Dendritic cell treated with granulocyte-macrophage colony-stimulating factor and Interleukin-4, amounts not matched to agents 40 ng/mL and 50 ng/mL, for 4 days (primary cell): ENCODE measurements at regions of chr20 and their contacts with region 1.

Region 1: DNA sequence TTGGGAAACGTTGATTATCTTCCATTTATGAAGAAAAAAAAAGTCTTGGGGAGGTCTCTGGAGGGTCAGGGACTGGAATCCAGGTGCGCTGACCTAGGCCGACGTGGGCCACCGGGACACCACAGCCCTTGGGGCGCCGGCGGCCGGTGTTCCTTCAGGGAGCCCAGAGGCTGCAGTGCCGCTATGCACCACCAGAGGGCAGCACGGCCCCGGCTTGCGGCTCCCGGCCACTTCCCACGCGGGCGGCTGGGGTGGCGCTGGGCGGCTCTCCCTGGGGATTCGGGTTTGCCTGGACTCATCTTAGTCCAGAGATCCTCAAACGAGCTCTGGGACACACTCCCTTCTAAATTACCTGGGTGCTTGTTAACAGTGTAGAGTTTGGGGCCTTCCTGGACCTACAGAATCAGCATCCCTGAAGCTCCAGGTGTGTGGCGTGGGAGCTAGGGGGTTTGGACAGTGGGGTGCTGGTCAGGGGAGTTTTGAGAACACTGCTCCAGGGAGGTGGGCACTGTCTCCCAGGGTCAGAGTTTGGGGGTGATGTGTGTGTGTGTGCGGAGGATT is 23.0 kb upstream of the GTSF1L start:
- H3K4me3 Mint-ChIP-seq: no peak overlapping the region
- H3K27ac Mint-ChIP-seq: no peak overlapping the region
- H3K4me1 Mint-ChIP-seq: peaks cover 65% of the 10 kb centered on the region
- H3K27me3 Mint-ChIP-seq: peaks cover 32% of the 10 kb centered on the region

Region 2: GRCh38 chr20:42688576-42688975 is 1061.2 kb before region 1 on chr20:
- intact Hi-C with region 1: no loop called
- H3K4me3 Mint-ChIP-seq: no peak overlapping the region
- H3K27ac Mint-ChIP-seq: no peak overlapping the region
- H3K4me1 Mint-ChIP-seq: no peaks in the 10 kb centered on the region
- H3K27me3 Mint-ChIP-seq: no peaks in the 10 kb centered on the region

Region 3: DNA sequence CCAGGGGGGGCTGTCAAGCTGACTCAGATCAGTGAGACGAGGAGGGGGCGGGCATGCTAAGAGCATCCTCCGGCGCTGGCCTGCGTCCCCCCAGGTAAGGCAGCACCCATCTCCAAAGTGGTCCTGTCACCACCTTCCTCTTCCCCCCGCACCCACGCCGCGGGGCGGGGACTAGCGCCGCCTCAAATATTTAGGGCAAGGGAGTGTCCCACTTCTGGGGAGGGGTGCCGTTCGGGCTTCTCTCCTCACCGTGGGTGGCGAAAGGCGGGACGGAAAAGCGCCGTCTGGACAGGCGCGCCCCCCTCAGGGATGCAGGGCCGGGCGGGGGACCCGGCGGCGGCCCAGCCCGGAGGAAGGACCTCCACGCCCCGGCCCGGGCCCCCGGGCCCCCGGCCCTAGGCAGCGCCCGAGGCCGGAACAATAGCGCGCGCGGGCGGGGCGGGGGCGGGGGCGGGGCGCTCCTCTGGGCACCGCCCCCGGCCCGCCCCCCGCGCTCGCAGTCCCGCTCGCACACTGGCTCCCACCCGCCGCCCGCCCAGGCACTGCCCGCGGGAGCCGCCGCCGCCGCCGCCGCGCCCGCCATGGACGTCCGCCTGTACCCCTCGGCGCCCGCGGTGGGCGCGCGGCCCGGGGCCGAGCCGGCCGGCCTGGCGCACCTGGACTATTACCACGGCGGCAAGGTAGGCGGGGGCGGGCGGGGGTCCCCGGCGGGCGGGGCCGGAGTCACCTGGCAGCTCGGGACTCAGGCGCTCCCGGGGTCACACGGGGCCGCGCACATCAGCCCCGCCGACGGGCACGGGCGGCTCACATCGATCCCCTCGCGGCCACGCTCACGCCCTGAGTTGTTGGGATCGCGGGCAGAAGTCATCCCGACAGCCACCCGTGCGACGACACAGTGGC is 164.7 kb after region 1 on chr20 and contains the start of gene TOX2:
- intact Hi-C with region 1: loop called (anchors 10 kb)
- H3K4me3 Mint-ChIP-seq: peak within 1 kb of the TSS; percentile 44
- H3K27ac Mint-ChIP-seq: peak within 1 kb of the TSS; percentile 2
- H3K4me1 Mint-ChIP-seq: peaks cover 40% of the 10 kb centered on the region
- H3K27me3 Mint-ChIP-seq: peaks cover 80% of the 10 kb centered on the region

Region 4: GRCh38 chr20:44080646-44081267 is 330.9 kb after region 1 on chr20:
- intact Hi-C with region 1: loop called (anchors 1 kb)
- H3K4me3 Mint-ChIP-seq: no peak overlapping the region
- H3K27ac Mint-ChIP-seq: no peak overlapping the region
- H3K4me1 Mint-ChIP-seq: peaks cover under 1% of the 10 kb centered on the region
- H3K27me3 Mint-ChIP-seq: peaks cover 4% of the 10 kb centered on the region